H1 (cell line): ENCODE measurements at regions of chr10 and their contacts with region 1.

Region 1: GRCh38 chr10:28663576-28664313 is 13.6 kb upstream of the BAMBI start:
- DNase-seq: peak in 1 of 2 experiments; percentile 73
- H3K4me3 ChIP-seq: no peak overlapping the region
- H3K27ac ChIP-seq: no peak overlapping the region
- H3K4me1 ChIP-seq: no peaks in the 10 kb centered on the region; a peak in 1 of 7 replicates
- H3K27me3 ChIP-seq: peaks cover 0 to 16% (median 9%) of the 10 kb centered on the region in 4 experiments; a peak in 5 of 7 replicates
- CTCF ChIP-seq: peak; percentile 87 to 93 (median 89)
- EP300 ChIP-seq: no peak
- POLR2A ChIP-seq: no peak
- RAD21 ChIP-seq: peak; percentile 99 to 100

Region 2: DNA sequence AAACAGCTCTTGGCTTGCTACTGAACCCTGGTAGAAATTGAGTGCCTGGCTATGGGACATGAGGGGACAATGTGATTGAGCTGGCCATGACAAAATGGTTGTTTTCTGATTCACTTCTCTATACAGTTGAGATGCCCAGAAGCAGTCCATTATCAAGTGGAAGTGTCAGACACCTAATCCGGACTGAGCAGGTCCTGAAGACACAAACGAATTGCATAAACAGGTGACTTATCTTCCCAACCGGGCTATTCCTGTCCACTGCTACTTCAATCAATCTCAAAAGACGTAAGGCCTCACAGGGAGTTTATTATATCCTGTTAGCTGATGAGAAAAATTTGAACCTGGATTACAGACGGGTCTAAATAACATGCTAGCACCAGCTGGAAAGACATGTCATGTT is 236.4 kb before region 1 on chr10:
- CTCF ChIA-PET with region 1: no interaction called
- POLR2A ChIA-PET with region 1: no interaction called
- DNase-seq: no peak
- H3K4me3 ChIP-seq: no peak overlapping the region
- H3K27ac ChIP-seq: no peak overlapping the region
- H3K4me1 ChIP-seq: 0 out of 7 replicates have a peak, but pooled peaks cover 0 to 3% (median 0%) of the 10 kb centered on the region in 4 experiments
- H3K27me3 ChIP-seq: no peaks in the 10 kb centered on the region
- CTCF ChIP-seq: no peak
- EP300 ChIP-seq: no peak
- POLR2A ChIP-seq: no peak
- RAD21 ChIP-seq: no peak

Region 3: DNA sequence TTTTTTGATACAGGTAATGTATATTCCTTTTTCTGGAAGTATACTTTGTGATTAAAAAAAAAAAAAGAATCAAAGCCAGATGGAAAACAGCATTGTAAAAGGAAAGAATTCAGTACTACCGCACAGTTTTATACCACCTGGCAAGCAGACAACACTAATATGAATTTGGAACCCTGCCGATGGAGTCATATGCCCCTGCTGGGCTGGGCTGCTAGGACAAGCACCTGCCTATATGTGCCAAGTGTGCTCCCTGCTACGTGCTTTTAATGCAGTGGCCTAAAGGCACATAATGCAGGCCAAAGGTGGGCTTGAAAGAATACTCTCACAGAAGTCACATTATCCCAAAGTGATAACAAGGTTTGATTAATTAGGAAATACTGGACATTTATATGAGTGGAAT is 160.6 kb before region 1 on chr10:
- CTCF ChIA-PET with region 1: no interaction called
- POLR2A ChIA-PET with region 1: no interaction called
- DNase-seq: no peak
- H3K4me3 ChIP-seq: no peak overlapping the region
- H3K27ac ChIP-seq: no peak overlapping the region
- H3K4me1 ChIP-seq: no peaks in the 10 kb centered on the region
- H3K27me3 ChIP-seq: no peaks in the 10 kb centered on the region
- CTCF ChIP-seq: no peak
- EP300 ChIP-seq: no peak
- POLR2A ChIP-seq: no peak
- RAD21 ChIP-seq: no peak

Region 4: DNA sequence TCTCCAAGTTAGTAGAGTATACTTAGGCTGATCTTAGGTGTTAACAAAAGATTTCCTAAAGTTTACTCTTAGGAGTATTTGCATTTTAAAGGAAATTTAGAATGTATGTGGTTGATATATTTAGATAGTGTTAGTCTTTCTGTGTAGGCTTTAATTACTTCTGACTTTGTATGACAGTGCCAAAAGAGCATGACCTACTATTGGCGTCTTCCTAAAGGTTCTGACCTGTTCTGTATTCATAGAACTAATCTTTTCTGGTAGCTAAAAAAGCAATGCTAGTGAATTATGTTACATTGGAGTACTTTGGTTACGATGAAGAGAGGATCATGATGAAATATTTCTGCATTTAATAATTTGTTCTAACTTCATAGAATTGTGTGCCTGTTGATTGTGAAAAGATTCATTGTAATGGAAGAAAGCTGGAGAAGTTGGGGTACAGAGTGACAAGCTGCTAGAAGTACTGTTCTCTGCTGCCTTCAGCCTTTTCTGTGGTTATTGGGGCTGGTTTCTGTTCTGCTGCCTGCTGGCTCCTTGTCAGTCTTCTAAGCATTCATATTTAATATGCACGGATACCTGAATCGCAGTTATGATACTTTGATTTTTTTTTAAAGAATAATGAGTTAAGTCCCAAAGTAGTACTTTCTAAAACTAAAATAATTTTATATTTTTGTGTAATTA is 117.6 kb before region 1 on chr10:
- CTCF ChIA-PET with region 1: no interaction called
- POLR2A ChIA-PET with region 1: no interaction called
- DNase-seq: no peak
- H3K4me3 ChIP-seq: no peak overlapping the region
- H3K27ac ChIP-seq: no peak overlapping the region
- H3K4me1 ChIP-seq: no peaks in the 10 kb centered on the region
- H3K27me3 ChIP-seq: no peaks in the 10 kb centered on the region
- CTCF ChIP-seq: no peak
- EP300 ChIP-seq: no peak
- POLR2A ChIP-seq: no peak
- RAD21 ChIP-seq: no peak

Region 5: GRCh38 chr10:28628184-28628893 is 35.4 kb before region 1 on chr10:
- CTCF ChIA-PET with region 1: interaction called, 10 read pairs
- POLR2A ChIA-PET with region 1: no interaction called
- DNase-seq: peak; percentile 46 to 87
- H3K4me3 ChIP-seq: no peak overlapping the region
- H3K27ac ChIP-seq: no peak overlapping the region
- H3K4me1 ChIP-seq: peaks cover 0 to 3% (median under 1%) of the 10 kb centered on the region in 4 experiments; a peak in 2 of 7 replicates
- H3K27me3 ChIP-seq: no peaks in the 10 kb centered on the region
- CTCF ChIP-seq: peak; percentile 88 to 94 (median 89)
- EP300 ChIP-seq: no peak
- POLR2A ChIP-seq: no peak
- RAD21 ChIP-seq: peak; percentile 95 to 97

Region 6: GRCh38 chr10:28939281-28940157 is 275.8 kb after region 1 on chr10:
- CTCF ChIA-PET with region 1: interaction called, 26 read pairs
- POLR2A ChIA-PET with region 1: no interaction called
- DNase-seq: peak; percentile 61 to 92
- H3K4me3 ChIP-seq: peak overlapping the region; percentile 23 to 62 (median 54); a peak in 7 of 8 replicates
- H3K27ac ChIP-seq: peak overlapping the region; percentile 9; the same call in 1 of the 2 replicates
- H3K4me1 ChIP-seq: no peaks in the 10 kb centered on the region
- H3K27me3 ChIP-seq: no peaks in the 10 kb centered on the region
- CTCF ChIP-seq: peak; percentile 84 to 89 (median 88)
- EP300 ChIP-seq: peak; percentile 40 to 90
- POLR2A ChIP-seq: no peak
- RAD21 ChIP-seq: peak; percentile 56 to 68

Region 7: DNA sequence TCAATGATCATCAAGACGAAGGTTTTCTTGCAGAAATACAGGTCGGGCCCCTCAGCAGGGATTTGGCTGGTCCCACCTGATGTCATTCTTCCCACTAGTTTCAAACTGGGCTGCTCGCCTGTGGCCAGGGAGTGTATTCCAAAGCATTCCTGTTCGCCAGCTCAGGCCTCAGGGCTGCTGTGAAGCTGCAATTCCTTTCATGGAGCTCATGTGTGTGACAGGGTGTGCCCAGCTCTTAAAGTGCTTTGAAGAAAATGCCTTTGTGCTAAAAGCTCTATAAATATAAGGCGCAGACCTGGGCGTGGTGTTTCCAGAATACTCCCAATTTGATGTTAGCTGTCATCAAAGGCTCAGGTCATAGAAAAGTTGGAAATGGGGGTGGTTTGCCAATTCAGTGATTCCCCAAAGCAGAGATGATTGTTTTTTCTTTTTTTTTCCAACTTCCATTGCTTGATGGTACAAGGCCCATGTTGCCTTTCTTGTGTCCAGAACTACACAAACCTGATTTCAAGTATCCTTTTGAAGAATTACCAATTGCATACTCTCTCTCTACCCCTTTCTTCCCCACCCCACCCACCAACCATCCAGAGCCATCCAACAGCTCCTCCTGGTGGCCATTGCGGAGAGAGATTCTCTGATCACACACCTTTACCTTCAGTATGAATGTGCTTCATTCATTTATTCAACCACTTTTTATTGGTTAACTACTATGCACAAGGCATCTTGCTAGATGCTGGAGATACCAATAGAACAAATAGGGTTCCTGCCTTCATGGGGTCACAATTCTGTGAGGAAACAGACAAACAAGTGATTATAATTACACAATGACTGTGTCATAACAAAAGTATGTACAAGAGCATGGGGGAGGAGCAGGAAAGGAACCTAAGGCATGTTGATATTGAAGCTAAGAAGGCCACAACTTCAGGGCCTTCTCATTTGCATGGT is 327.9 kb after region 1 on chr10:
- CTCF ChIA-PET with region 1: interaction called, 73 read pairs
- POLR2A ChIA-PET with region 1: no interaction called
- DNase-seq: peak; percentile 17 to 83
- H3K4me3 ChIP-seq: no peak overlapping the region
- H3K27ac ChIP-seq: no peak overlapping the region
- H3K4me1 ChIP-seq: no peaks in the 10 kb centered on the region
- H3K27me3 ChIP-seq: no peaks in the 10 kb centered on the region
- CTCF ChIP-seq: peak; percentile 67 to 88 (median 86)
- EP300 ChIP-seq: no peak
- POLR2A ChIP-seq: no peak
- RAD21 ChIP-seq: peak; percentile 97 to 99

Region 8: GRCh38 chr10:29119374-29119773 is 455.6 kb after region 1 on chr10:
- CTCF ChIA-PET with region 1: interaction called, 10 read pairs
- POLR2A ChIA-PET with region 1: no interaction called
- DNase-seq: peak; percentile 64 to 96
- H3K4me3 ChIP-seq: no peak overlapping the region
- H3K27ac ChIP-seq: no peak overlapping the region
- H3K4me1 ChIP-seq: 0 out of 7 replicates have a peak, but pooled peaks cover 0 to 2% (median 0%) of the 10 kb centered on the region in 4 experiments
- H3K27me3 ChIP-seq: no peaks in the 10 kb centered on the region
- CTCF ChIP-seq: peak; percentile 81 to 95 (median 81)
- EP300 ChIP-seq: no peak
- POLR2A ChIP-seq: no peak
- RAD21 ChIP-seq: peak; percentile 69 to 78

Region 9: GRCh38 chr10:29131952-29132820 is 468.4 kb after region 1 on chr10:
- CTCF ChIA-PET with region 1: interaction called, 11 read pairs
- POLR2A ChIA-PET with region 1: no interaction called
- DNase-seq: no peak
- H3K4me3 ChIP-seq: no peak overlapping the region
- H3K27ac ChIP-seq: no peak overlapping the region
- H3K4me1 ChIP-seq: peaks cover 0 to 5% (median 0%) of the 10 kb centered on the region in 4 experiments; a peak in 2 of 7 replicates
- H3K27me3 ChIP-seq: no peaks in the 10 kb centered on the region
- CTCF ChIP-seq: no peak
- EP300 ChIP-seq: no peak
- POLR2A ChIP-seq: no peak
- RAD21 ChIP-seq: no peak